Right cardiac atrium (tissue), 5 donors: ENCODE measurements at regions of chrX and their contacts with region 1.

Region 1: GRCh38 chrX:119145241-119145653 is 17.6 kb upstream of the KIAA1210 start:
- DNase-seq: peak in 1 of 3 donors; percentile 45
- ATAC-seq: no peak
- H3K4me3 ChIP-seq: no peak overlapping the region
- H3K27ac ChIP-seq: no peak overlapping the region
- H3K4me1 ChIP-seq: no peaks in the 10 kb centered on the region
- H3K27me3 ChIP-seq: no peaks in the 10 kb centered on the region

Region 2: DNA sequence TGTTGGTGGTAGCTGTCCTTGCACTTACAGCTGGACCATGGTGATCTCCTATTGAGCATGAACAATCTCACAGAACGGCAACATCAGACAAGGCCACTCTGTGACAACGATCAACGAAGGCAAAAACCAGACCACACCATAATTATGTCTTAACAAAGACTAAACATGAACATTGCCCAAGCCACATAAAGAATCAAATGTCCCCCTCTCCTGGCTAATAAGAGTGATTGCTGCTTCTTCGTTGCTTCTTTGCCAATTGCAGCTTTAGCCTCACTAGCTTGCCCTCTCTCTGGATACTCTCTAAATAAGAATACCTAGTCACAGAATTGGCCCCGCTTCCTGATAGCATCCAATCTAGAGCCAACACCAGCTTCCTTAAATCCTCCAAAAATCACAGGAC is 49.4 kb after region 1 on chrX:
- intact Hi-C with region 1: loop called in 1 of 4 experiments (anchors 10 kb)
- DNase-seq: no peak
- ATAC-seq: no peak
- H3K4me3 ChIP-seq: no peak overlapping the region
- H3K27ac ChIP-seq: no peak overlapping the region
- H3K4me1 ChIP-seq: no peaks in the 10 kb centered on the region
- H3K27me3 ChIP-seq: no peaks in the 10 kb centered on the region